Activated CD4-positive, alpha-beta memory T cell treated with anti-CD3 and anti-CD28 coated beads for 36 hours (primary cell): ENCODE measurements at regions of chr22 and their contacts with region 1.

Region 1: DNA sequence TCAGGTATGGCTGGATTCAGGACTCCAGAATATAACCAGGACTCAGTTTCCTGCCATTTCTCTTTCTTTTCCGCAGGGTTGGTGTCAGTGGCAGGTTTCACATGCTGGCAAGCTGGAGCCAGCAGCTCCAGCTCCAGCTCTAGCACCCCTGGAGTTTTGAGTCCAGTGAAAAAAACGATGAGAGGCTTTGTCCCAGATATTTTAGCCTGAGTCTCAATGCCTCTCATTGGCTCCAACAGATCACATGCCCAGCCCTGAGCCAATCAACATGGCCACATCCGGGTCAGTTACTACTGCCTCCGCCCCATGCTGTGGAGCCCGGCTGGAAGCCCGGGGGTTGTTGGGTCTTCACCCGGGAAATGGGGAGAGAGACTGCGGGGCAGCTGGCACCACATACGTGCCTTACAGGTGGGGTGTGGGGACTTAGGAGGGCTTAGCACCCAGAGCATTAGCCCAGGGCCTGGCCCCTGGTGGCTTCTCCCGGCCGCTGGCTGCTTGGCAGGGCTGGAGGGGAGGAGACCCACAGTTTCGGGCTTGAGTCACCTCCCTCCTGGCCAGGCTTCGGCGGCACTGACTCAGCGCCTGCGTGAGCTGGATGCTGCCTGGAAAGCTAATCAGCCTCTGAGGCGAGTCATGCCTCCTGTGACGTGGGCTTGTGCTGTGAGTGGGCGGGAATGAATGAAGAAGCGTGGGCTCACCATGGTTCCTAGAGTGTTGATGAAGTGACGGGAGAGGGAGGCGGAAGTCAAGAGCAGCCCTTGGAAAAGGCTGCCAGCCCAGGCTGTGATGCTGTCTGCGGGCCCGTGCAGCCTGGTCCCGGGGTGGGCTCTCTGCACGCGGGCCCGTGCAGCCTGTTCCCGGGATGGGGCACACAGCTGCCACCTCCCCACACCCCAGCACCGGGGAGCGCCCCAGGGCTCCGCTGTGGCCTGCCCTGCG is 15.3 kb upstream of the MRTFA start:
- DNase-seq: peak; percentile 97
- H3K4me3 Mint-ChIP-seq: peak overlapping the region; percentile 70
- H3K27ac Mint-ChIP-seq: peak overlapping the region; percentile 91
- H3K4me1 Mint-ChIP-seq: peaks cover 24% of the 10 kb centered on the region
- H3K27me3 Mint-ChIP-seq: no peaks in the 10 kb centered on the region

Region 2: DNA sequence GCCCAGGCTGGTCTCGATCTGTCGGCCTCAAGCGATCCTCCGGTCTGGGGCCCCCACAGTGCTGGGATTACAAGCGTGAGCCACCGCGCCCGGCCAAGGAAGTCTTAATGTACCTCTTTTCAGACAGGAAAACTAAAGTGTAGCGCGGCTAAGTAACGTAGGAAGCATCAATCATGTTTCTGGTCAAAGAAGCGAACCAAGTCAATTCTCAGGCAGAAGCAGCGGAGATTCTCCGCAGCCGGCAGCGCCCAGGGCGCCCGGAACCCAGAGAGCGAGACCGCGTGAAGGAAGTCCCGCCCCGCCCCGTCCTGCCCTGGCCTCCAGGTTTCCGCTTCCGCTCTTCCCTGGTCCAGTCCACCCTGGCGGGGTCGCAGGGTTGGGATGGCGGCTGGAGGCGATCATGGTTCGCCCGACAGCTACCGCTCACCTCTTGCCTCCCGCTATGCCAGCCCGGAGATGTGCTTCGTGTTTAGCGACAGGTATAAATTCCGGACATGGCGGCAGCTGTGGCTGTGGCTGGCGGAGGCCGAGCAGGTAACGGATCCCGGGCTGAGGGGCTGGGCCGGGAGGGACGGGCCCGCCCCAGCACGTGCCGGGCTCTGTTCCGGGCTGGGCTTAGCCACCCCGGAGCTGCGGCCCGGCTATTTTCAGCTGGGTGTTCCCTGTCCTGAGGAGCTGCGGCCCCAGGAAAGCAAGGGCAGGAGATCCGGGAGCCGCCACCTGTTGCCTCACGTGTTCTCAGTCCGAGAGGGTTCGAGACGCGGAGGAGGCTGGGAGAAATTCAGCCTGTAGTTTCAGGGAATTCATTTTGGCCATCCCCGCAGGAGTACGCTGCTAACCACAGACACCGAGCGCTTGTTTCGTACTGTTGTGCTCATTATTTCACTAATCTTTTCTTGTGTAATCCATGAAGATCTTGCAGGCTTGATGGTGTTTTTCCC is 305.4 kb before region 1 on chr22 and contains the start of gene ADSL:
- CTCF ChIA-PET with region 1: no interaction called
- POLR2A ChIA-PET with region 1: no interaction called
- intact Hi-C with region 1: no loop called
- DNase-seq: peak; percentile 91
- H3K4me3 Mint-ChIP-seq: peak within 1 kb of the TSS; percentile 99
- H3K27ac Mint-ChIP-seq: peak within 1 kb of the TSS; percentile 100
- H3K4me1 Mint-ChIP-seq: peaks cover 49% of the 10 kb centered on the region
- H3K27me3 Mint-ChIP-seq: no peaks in the 10 kb centered on the region
- total RNA-seq, gene ADSL: 143 to 146 TPM

Region 3: GRCh38 chr22:40668611-40669411 is 17.0 kb after region 1 on chr22:
- CTCF ChIA-PET with region 1: interaction called, 4 read pairs
- POLR2A ChIA-PET with region 1: interaction called, 3 read pairs
- intact Hi-C with region 1: loop called (anchors 2 kb)
- DNase-seq: peak; percentile 45
- H3K4me3 Mint-ChIP-seq: peak overlapping the region; percentile 6
- H3K27ac Mint-ChIP-seq: peak overlapping the region; percentile 81
- H3K4me1 Mint-ChIP-seq: peaks cover 23% of the 10 kb centered on the region
- H3K27me3 Mint-ChIP-seq: no peaks in the 10 kb centered on the region

Region 4: GRCh38 chr22:40898850-40899357 is 247.1 kb after region 1 on chr22:
- CTCF ChIA-PET with region 1: interaction called, 14 read pairs
- POLR2A ChIA-PET with region 1: no interaction called
- intact Hi-C with region 1: no loop called
- DNase-seq: peak; percentile 41
- H3K4me3 Mint-ChIP-seq: peak overlapping the region; percentile 20
- H3K27ac Mint-ChIP-seq: peak overlapping the region; percentile 88
- H3K4me1 Mint-ChIP-seq: peaks cover 14% of the 10 kb centered on the region
- H3K27me3 Mint-ChIP-seq: no peaks in the 10 kb centered on the region